K562 (cell line): ENCODE measurements at regions of chr21 and their contacts with region 1.

Region 1: DNA sequence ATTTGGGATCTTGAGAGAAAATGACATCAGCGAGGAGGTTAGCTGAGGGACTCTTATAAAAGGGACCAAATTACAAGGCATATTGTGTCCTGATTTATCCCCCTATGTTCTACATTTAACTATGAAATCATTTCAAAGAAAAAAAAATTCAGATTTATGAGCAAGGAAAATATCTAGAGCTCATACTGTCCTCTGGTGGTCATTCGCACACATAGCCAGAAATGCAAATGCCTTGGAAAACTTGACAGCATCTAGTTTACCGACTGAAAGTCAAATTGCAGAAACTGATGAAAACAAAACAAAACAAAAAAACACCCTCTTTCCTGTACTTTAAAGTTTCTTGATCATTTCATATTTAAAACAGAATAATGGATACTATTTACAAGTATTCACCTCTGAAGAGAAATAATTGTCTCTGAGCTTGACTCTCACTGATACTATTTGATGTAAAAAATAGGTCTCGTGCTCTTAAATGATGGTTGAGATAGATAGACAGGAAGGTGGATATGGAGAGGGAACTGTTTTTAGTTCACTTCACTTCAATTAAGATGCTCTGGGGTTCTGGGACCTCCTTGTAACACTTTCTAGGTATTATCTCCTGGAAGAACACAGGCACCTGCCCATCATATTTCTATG is 253.8 kb downstream of the PCP4 start:
- DNase-seq: peak; percentile 20 to 36 (median 29)
- ATAC-seq: no peak
- H3K4me3 ChIP-seq: no peak overlapping the region
- H3K27ac ChIP-seq: no peak overlapping the region
- H3K4me1 ChIP-seq: no peaks in the 10 kb centered on the region
- H3K27me3 ChIP-seq: no peaks in the 10 kb centered on the region
- CTCF ChIP-seq: peak; percentile 23 to 76 (median 70); a peak in 4 of 6 replicates
- EP300 ChIP-seq: no peak
- POLR2A ChIP-seq: no peak
- RAD21 ChIP-seq: peak; percentile 72 to 81

Region 2: GRCh38 chr21:39527664-39528381 is 593.2 kb before region 1 on chr21:
- CTCF ChIA-PET with region 1: no interaction called
- POLR2A ChIA-PET with region 1: no interaction called
- in situ Hi-C with region 1: loop called (anchors 10 kb)
- intact Hi-C with region 1: no loop called
- DNase-seq: no peak
- ATAC-seq: no peak
- H3K4me3 ChIP-seq: no peak overlapping the region
- H3K27ac ChIP-seq: no peak overlapping the region
- H3K4me1 ChIP-seq: no peaks in the 10 kb centered on the region
- H3K27me3 ChIP-seq: peaks cover 17 to 48% of the 10 kb centered on the region in 2 experiments; a peak in 4 of 5 replicates
- CTCF ChIP-seq: no peak
- EP300 ChIP-seq: no peak
- POLR2A ChIP-seq: no peak
- RAD21 ChIP-seq: no peak

Region 3: DNA sequence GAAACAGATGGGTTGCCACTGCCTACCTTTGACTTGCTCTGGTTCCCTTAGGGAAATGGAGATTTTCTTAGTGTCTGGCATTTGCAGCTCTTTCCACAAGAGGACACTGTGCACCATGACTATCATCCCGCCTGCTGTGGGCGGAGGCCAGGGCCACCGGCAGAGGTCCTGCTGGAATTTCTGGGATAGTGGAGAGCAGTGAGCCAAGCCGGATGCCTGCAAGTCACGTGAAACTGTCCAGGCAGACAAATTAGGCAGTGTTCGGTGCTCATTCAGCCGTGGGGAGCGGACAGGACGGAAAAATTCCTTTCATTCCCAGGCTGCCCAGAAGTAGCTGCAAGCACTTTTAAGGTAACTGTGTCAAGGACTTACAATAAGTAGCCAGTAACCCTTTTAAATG is 332.7 kb before region 1 on chr21:
- CTCF ChIA-PET with region 1: interaction called, 4 read pairs
- POLR2A ChIA-PET with region 1: no interaction called
- in situ Hi-C with region 1: no loop called
- intact Hi-C with region 1: loop called (anchors 2 kb)
- DNase-seq: peak; percentile 28 to 75 (median 51)
- ATAC-seq: peak; percentile 99
- H3K4me3 ChIP-seq: no peak overlapping the region
- H3K27ac ChIP-seq: no peak overlapping the region
- H3K4me1 ChIP-seq: no peaks in the 10 kb centered on the region
- H3K27me3 ChIP-seq: no peaks in the 10 kb centered on the region
- CTCF ChIP-seq: peak; percentile 89 to 97 (median 95)
- EP300 ChIP-seq: no peak
- POLR2A ChIP-seq: no peak
- RAD21 ChIP-seq: peak; percentile 92 to 95

Region 4: GRCh38 chr21:39867198-39867650 is 253.8 kb before region 1 on chr21 and contains the start of gene PCP4:
- CTCF ChIA-PET with region 1: no interaction called
- POLR2A ChIA-PET with region 1: interaction called, 3 read pairs
- in situ Hi-C with region 1: no loop called
- intact Hi-C with region 1: loop called (anchors 2 kb)
- DNase-seq: peak; percentile 64 to 74 (median 70)
- ATAC-seq: peak; percentile 94
- H3K4me3 ChIP-seq: no peak within 1 kb of the TSS
- H3K27ac ChIP-seq: no peak within 1 kb of the TSS
- H3K4me1 ChIP-seq: no peaks in the 10 kb centered on the region
- H3K27me3 ChIP-seq: peaks cover 2 to 4% of the 10 kb centered on the region in 2 experiments; a peak in 1 of 5 replicates
- CTCF ChIP-seq: peak; percentile 79 to 94 (median 88)
- EP300 ChIP-seq: no peak
- POLR2A ChIP-seq: no peak
- RAD21 ChIP-seq: peak in 1 of 2 experiments; percentile 74; a peak in 2 of 4 replicates
- polyA plus RNA-seq, gene PCP4: not detected

Region 5: DNA sequence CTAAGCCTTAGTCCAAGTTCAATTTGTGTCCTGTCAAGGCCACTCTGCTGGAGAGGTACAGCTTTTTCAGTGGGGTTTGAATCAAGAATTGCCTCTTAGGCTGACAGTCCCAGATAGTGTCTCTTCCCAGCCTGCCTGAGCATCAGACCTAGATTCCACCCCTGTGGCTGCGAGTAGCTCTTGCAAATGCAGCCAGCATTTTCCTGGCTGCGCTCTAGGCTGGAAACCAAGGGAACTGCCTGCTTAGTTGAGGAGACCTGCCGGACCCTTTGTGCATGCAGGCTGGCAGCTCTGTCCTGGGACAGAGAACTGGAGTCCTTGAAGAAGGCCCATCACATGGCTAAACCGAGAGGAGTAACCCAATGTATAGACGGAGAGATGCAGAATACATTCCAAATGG is 39.9 kb after region 1 on chr21:
- CTCF ChIA-PET with region 1: no interaction called
- POLR2A ChIA-PET with region 1: no interaction called
- in situ Hi-C with region 1: no loop called
- intact Hi-C with region 1: no loop called
- DNase-seq: no peak
- ATAC-seq: no peak
- H3K4me3 ChIP-seq: no peak overlapping the region
- H3K27ac ChIP-seq: no peak overlapping the region
- H3K4me1 ChIP-seq: no peaks in the 10 kb centered on the region
- H3K27me3 ChIP-seq: no peaks in the 10 kb centered on the region
- CTCF ChIP-seq: no peak
- EP300 ChIP-seq: no peak
- POLR2A ChIP-seq: no peak
- RAD21 ChIP-seq: no peak

Region 6: GRCh38 chr21:40200946-40201345 is 79.9 kb after region 1 on chr21:
- CTCF ChIA-PET with region 1: no interaction called
- POLR2A ChIA-PET with region 1: no interaction called
- in situ Hi-C with region 1: no loop called
- intact Hi-C with region 1: no loop called
- DNase-seq: no peak
- ATAC-seq: no peak
- H3K4me3 ChIP-seq: no peak overlapping the region
- H3K27ac ChIP-seq: no peak overlapping the region
- H3K4me1 ChIP-seq: no peaks in the 10 kb centered on the region
- H3K27me3 ChIP-seq: no peaks in the 10 kb centered on the region
- CTCF ChIP-seq: no peak
- EP300 ChIP-seq: no peak
- POLR2A ChIP-seq: no peak
- RAD21 ChIP-seq: no peak